Activated naive CD4-positive, alpha-beta T cell treated with anti-CD3 and anti-CD28 coated beads for 36 hours (primary cell): ENCODE measurements at regions of chr20 and their contacts with region 1.

Region 1: DNA sequence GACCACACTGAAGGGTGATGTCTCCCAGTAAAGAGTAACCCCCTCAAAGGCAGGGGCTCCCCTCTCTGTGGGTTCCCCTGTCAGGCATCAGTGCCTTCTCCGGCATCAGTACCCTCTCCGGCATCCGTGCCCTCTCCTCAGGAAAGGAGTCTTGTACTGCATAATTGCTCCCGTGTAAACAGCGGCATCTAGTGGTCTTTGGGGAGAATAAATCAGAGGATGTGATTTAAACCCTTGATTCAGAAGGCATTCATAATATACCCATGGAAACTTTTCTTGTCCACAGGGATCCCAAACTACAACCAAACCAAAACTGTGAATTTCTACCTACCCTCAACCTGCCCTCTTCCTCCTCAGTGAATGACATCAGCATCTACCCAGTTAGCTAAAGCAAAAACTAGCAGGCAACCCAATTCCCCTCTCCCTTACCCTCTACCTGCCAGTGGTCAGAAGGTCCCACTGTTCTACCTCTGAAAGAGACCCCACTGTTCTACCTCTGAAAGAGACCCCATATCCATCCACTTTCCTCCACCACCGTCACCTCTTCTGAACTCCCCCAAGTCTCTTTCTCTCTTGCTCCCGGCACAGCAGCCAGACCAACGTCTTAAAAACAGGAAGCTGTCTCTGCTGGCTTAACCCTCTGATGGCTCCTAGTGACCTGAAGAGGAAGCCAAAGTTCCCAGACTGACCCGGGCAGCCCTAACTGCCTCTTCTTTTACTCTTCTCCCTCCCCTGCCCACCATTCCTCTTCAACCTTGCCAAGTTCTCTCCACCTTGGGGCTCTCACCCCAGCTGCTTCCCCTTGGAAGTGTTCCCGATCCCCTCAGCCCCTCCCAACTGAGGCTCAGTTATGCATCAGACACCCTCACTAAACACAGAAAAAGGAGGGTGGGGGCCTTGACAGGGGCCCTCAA is 27.2 kb downstream of the UBE2V1 start:
- DNase-seq: peak; percentile 58
- H3K4me3 Mint-ChIP-seq: peak overlapping the region; percentile 5
- H3K27ac Mint-ChIP-seq: peak overlapping the region; percentile 11
- H3K4me1 Mint-ChIP-seq: peaks cover 28% of the 10 kb centered on the region
- H3K27me3 Mint-ChIP-seq: no peaks in the 10 kb centered on the region

Region 2: GRCh38 chr20:50101281-50101680 is 15.6 kb after region 1 on chr20:
- CTCF ChIA-PET with region 1: interaction called, 12 read pairs
- intact Hi-C with region 1: no loop called
- DNase-seq: no peak
- H3K4me3 Mint-ChIP-seq: no peak overlapping the region
- H3K27ac Mint-ChIP-seq: no peak overlapping the region
- H3K4me1 Mint-ChIP-seq: peaks cover 42% of the 10 kb centered on the region
- H3K27me3 Mint-ChIP-seq: no peaks in the 10 kb centered on the region

Region 3: DNA sequence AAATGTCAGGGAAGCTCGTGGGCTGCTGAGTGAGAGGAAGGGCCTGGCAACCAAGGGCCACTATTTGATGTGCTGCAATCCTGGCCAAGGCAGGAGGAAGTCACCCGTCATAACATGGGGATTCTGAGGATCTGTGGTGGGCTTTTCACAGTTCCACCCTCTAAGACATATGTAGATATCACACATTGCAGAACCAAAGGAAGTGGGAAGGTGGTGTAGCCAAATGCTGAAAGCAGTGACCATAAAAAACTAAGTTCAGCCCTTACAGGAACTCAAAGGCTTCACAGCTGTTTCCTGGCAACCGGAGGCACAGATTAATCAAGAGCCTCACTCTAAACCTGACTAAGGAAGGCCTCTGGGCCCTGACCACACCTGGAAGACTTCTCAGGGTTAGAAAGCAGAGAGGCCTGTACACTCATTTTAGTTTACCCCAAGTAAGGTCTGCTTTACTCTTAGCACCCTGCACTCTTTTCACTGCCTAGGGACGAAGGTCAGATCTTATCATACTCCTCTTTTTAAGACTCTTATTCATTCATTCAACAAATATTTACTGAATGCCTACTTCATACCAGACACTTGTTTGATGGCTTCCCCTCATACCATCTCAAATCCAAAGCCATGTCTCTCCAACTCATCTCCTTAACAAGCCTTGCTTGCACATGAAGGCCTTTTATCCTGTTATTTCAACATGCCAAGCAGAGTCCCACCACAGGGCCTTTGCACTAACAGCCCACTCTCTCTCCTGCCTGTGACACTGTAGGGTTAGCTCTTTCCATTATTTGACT is 24.6 kb after region 1 on chr20:
- CTCF ChIA-PET with region 1: interaction called, 6 read pairs
- intact Hi-C with region 1: loop called (anchors 2 kb)
- DNase-seq: peak; percentile 65
- H3K4me3 Mint-ChIP-seq: peak overlapping the region; percentile 89
- H3K27ac Mint-ChIP-seq: peak overlapping the region; percentile 81
- H3K4me1 Mint-ChIP-seq: peaks cover 73% of the 10 kb centered on the region
- H3K27me3 Mint-ChIP-seq: no peaks in the 10 kb centered on the region